ENCODE measurements at regions of chr19 and their contacts with region 1.

Region 1: GRCh38 chr19:2636897-2637683 is 65.4 kb downstream of the GNG7 start:
- DNase-seq: peak; percentile 39
- H3K4me3 Mint-ChIP-seq: peak overlapping the region; percentile 28
- H3K27ac Mint-ChIP-seq: no peak overlapping the region
- H3K4me1 Mint-ChIP-seq: peaks cover 5% of the 10 kb centered on the region
- H3K27me3 Mint-ChIP-seq: no peaks in the 10 kb centered on the region
- CTCF ChIP-seq: peak; percentile 90

Region 2: DNA sequence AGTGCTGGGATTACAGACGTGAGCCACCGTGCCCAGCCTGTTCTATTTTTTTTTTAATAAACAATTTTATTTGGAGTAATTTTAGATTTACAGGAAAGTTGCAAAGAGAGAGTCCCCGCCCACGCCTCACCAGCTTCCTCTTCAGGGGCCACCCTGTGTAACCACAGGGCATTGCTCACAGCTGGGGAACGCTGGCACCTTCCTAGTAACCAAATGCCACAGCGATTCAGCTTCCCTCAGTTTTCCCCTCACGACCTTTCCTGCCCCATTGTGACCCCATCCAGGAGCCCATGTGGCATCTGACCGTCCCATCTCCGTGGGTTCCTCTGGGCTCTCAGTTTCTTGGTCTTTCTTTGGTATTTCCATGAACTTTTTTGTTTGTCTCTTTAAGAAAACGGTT is 18.5 kb before region 1 on chr19:
- CTCF ChIA-PET with region 1: interaction called, 45 read pairs
- POLR2A ChIA-PET with region 1: interaction called, 6 read pairs
- intact Hi-C with region 1: no loop called
- DNase-seq: peak; percentile 89
- H3K4me3 Mint-ChIP-seq: peak overlapping the region; percentile 3
- H3K27ac Mint-ChIP-seq: peak overlapping the region; percentile 95
- H3K4me1 Mint-ChIP-seq: peaks cover 18% of the 10 kb centered on the region
- H3K27me3 Mint-ChIP-seq: no peaks in the 10 kb centered on the region
- CTCF ChIP-seq: no peak

Region 3: DNA sequence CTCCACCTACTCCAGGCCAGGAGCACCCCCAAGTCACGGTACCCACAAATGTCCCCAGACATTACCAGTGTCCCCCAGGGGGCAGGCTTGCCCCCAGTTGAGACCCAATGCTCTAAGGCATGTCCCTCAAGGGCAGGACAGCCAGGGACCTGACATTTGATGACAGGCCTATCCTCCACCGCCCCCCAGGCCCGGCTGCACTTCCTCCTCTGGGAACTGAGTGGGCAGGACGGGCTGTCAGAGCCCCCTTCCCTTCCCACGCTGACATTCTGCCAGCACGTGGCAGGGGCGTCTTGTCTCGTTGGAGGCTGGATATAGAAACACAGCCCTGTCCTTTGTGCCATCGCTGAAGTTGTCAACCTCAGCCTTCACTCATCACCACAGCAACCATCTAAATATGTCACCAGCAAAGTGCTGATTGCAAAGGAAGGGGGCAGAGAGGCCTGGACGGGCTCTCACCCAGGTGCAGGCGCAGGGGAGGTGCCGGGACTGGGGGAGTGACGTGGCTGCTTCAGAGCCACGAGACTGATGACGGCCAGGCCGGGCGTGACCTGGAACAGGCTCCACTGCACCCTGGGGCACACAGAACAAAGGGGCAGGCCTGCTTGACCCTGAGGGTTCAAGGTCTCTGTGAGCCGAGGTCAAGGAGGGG is 27.0 kb after region 1 on chr19:
- CTCF ChIA-PET with region 1: no interaction called
- POLR2A ChIA-PET with region 1: no interaction called
- intact Hi-C with region 1: no loop called
- DNase-seq: no peak
- H3K4me3 Mint-ChIP-seq: no peak overlapping the region
- H3K27ac Mint-ChIP-seq: no peak overlapping the region
- H3K4me1 Mint-ChIP-seq: no peaks in the 10 kb centered on the region
- H3K27me3 Mint-ChIP-seq: peaks cover under 1% of the 10 kb centered on the region
- CTCF ChIP-seq: no peak

Region 4: DNA sequence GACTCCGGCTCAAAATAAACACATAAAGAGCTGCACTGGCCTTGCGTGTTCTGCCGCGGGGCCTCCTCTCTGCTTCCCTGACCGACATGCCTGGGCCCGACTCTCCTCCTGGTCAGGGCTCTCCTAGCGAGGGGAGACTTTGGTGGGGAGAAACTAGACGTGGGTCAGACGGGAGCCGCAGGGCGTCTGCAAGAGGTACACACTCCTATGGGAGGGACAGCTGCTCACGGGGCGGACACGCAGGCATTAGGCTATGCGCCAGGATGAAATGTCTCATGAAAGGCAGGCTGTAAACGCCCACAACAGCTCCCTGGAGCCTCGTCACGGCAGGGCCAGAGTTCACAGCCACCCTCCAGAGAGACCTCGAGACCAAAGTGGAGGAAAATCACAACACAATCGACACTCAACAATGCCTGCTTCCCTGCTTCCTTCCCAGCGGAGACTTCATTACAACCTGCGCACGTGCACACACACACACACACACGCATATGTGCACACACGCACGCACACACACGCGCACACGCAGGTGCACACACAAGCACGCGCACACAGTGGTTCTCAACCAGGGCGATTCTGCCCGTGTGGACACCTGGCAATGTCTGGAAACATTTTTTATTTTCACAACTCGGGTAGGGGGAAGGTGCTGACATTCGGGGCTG is 97.0 kb after region 1 on chr19:
- CTCF ChIA-PET with region 1: no interaction called
- POLR2A ChIA-PET with region 1: no interaction called
- intact Hi-C with region 1: no loop called
- DNase-seq: no peak
- H3K4me3 Mint-ChIP-seq: no peak overlapping the region
- H3K27ac Mint-ChIP-seq: no peak overlapping the region
- H3K4me1 Mint-ChIP-seq: peaks cover 6% of the 10 kb centered on the region
- H3K27me3 Mint-ChIP-seq: no peaks in the 10 kb centered on the region
- CTCF ChIP-seq: no peak

Region 5: DNA sequence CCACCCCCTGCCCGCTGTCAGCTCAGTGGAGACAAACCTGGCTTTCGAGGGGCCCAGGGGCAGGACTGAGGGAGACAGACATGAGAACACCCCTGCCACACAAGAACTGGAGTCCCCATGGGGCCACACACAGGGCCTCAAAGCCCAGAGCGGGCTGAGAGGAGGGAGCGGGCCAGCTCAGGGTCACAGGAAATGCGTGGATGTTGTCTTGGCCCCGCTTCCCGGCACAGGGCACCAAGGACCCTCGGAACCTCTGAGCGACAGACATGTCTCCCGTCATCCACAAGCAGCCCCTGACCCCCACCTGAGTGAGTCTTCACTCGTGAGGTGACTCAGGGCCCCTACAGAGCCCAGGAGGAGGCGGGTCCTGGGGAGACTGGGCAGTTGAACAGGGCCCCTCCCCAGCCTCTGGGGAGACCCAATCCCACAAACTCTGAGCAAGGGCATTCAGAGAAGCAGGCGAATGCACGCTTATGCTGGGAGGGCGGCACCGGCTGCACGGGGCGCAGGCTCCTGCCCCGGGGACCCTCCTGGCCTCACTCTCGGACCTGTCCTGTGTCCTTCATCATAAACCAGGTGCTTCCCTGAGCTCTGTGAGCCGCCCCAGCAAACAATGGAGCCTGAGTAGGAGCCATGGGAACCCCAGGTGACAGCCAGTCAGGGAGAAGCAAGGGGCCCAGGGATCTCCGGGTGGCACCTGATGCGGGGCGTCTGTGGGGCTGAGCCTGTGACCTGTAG is 125.8 kb after region 1 on chr19:
- CTCF ChIA-PET with region 1: no interaction called
- POLR2A ChIA-PET with region 1: no interaction called
- intact Hi-C with region 1: no loop called
- DNase-seq: no peak
- H3K4me3 Mint-ChIP-seq: no peak overlapping the region
- H3K27ac Mint-ChIP-seq: no peak overlapping the region
- H3K4me1 Mint-ChIP-seq: no peaks in the 10 kb centered on the region
- H3K27me3 Mint-ChIP-seq: no peaks in the 10 kb centered on the region
- CTCF ChIP-seq: no peak